ENCODE measurements at regions of chr20 and their contacts with region 1.

Region 1: GRCh38 chr20:49046087-49046900 is at the start of gene CSE1L:
- DNase-seq: peak; percentile 95
- H3K4me3 Mint-ChIP-seq: peak within 1 kb of the TSS; percentile 99
- H3K27ac Mint-ChIP-seq: peak within 1 kb of the TSS; percentile 98
- H3K4me1 Mint-ChIP-seq: peaks cover 38% of the 10 kb centered on the region
- H3K27me3 Mint-ChIP-seq: no peaks in the 10 kb centered on the region
- total RNA-seq, gene CSE1L: 65.6 to 67.8 TPM

Region 2: DNA sequence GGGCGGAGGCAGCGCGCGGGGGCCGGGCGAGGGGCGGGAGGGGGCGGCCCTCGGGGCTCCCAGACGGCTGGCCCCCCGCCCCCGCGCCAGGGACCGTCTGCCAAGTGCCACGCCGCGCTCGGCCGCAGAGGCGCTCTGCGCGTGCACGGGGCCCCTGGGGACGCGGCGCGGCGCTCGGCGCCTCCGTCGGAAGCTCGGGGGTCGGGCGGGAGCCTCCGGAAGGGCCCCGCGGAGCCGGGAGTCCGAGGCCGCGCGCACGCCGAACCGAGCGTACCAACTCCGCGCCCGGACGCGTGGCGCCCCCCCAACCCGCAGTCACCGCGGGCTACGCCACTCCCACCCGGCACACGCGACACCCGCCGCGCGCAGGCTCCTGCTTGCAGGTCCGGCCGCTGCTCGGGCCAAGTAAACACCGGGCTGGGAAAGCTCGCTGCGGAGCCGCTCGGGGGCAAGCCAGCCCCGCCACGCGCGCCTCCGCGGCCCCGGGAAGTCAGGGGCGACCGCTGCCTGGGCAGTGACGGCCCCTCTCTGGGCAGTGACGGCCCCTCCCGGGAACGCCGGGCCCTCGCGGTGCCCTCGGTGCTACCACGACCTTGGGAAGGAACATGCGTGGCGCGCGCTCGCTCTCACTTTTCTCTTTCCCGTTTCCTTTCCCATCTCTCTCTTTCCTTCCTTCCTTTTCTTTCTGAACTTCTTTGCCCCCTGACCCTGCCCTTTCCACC is 218.1 kb before region 1 on chr20:
- CTCF ChIA-PET with region 1: no interaction called
- POLR2A ChIA-PET with region 1: interaction called, 12 read pairs
- DNase-seq: peak; percentile 87
- H3K4me3 Mint-ChIP-seq: peak overlapping the region; percentile 77
- H3K27ac Mint-ChIP-seq: peak overlapping the region; percentile 41
- H3K4me1 Mint-ChIP-seq: peaks cover 13% of the 10 kb centered on the region
- H3K27me3 Mint-ChIP-seq: peaks cover 5% of the 10 kb centered on the region

Region 3: GRCh38 chr20:49028684-49029083 is 17.6 kb before region 1 on chr20:
- CTCF ChIA-PET with region 1: interaction called, 3 read pairs
- POLR2A ChIA-PET with region 1: interaction called, 19 read pairs
- DNase-seq: no peak
- H3K4me3 Mint-ChIP-seq: no peak overlapping the region
- H3K27ac Mint-ChIP-seq: peak overlapping the region; percentile 40
- H3K4me1 Mint-ChIP-seq: no peaks in the 10 kb centered on the region
- H3K27me3 Mint-ChIP-seq: no peaks in the 10 kb centered on the region

Region 4: GRCh38 chr20:49063279-49063678 is 17.0 kb after region 1 on chr20:
- CTCF ChIA-PET with region 1: interaction called, 3 read pairs
- POLR2A ChIA-PET with region 1: interaction called, 37 read pairs
- DNase-seq: no peak
- H3K4me3 Mint-ChIP-seq: no peak overlapping the region
- H3K27ac Mint-ChIP-seq: no peak overlapping the region
- H3K4me1 Mint-ChIP-seq: peaks cover 4% of the 10 kb centered on the region
- H3K27me3 Mint-ChIP-seq: no peaks in the 10 kb centered on the region

Region 5: GRCh38 chr20:49166534-49167449 is 120.5 kb after region 1 on chr20:
- CTCF ChIA-PET with region 1: no interaction called
- POLR2A ChIA-PET with region 1: interaction called, 10 read pairs
- DNase-seq: no peak
- H3K4me3 Mint-ChIP-seq: peak overlapping the region; percentile 46
- H3K27ac Mint-ChIP-seq: peak overlapping the region; percentile 64
- H3K4me1 Mint-ChIP-seq: peaks cover 51% of the 10 kb centered on the region
- H3K27me3 Mint-ChIP-seq: no peaks in the 10 kb centered on the region

Region 6: GRCh38 chr20:49186535-49187329 is 140.4 kb after region 1 on chr20:
- CTCF ChIA-PET with region 1: no interaction called
- POLR2A ChIA-PET with region 1: interaction called, 17 read pairs
- DNase-seq: peak; percentile 73
- H3K4me3 Mint-ChIP-seq: peak overlapping the region; percentile 90
- H3K27ac Mint-ChIP-seq: peak overlapping the region; percentile 81
- H3K4me1 Mint-ChIP-seq: peaks cover 48% of the 10 kb centered on the region
- H3K27me3 Mint-ChIP-seq: peaks cover 7% of the 10 kb centered on the region

Region 7: DNA sequence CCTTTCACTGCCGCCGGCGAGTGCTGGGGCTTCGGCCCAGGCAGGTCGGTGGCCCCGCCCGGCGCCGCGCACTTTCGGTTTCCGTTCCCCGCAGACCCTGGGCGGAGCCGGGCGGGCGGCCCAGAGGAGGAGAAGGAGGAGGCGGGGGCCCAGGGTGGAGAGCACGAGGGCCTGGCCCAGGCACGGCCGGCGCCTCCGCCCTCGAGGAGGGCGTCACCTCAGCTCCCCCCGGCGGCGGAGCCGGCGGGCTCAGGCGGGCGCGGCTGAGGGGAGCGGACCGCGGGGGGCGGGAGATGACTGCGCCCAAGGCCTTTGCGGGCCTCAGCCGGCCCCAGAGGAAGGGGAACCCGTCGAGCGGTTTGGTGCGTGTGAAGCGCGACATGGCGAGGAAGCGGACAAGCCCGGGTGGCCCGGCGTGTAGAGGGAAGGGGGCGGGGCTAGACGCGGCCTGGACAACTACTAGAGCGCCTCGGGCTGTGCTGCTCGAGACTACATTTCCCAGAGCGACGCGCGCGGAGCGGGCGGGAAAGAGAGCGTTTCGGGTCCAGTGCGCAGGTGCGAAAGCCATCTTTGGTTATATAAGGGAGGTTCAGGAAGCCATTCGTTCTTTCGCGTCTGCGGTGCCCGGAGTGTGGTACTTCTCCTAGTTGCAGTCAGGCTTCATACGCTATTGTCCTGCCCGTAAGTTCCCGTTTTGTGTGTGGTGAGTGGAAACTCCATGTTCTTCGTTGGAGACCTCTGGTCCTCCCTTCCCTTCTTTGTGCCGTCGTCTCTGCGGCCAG is 231.9 kb after region 1 on chr20 and contains the start of gene ZNFX1:
- CTCF ChIA-PET with region 1: no interaction called
- POLR2A ChIA-PET with region 1: interaction called, 13 read pairs
- DNase-seq: peak; percentile 99
- H3K4me3 Mint-ChIP-seq: peak within 1 kb of the TSS; percentile 100
- H3K27ac Mint-ChIP-seq: peak within 1 kb of the TSS; percentile 98
- H3K4me1 Mint-ChIP-seq: peaks cover 58% of the 10 kb centered on the region
- H3K27me3 Mint-ChIP-seq: no peaks in the 10 kb centered on the region
- total RNA-seq, gene ZNFX1: 88.7 to 89.5 TPM

Measured in activated CD4-positive, alpha-beta memory T cell treated with anti-CD3 and anti-CD28 coated beads, Interleukin-2, amount 10 ng/mL, durations not matched to agents 7 days and 5 days (primary cell).